ENCODE measurements at regions of chr15 and their contacts with region 1.

Region 1: DNA sequence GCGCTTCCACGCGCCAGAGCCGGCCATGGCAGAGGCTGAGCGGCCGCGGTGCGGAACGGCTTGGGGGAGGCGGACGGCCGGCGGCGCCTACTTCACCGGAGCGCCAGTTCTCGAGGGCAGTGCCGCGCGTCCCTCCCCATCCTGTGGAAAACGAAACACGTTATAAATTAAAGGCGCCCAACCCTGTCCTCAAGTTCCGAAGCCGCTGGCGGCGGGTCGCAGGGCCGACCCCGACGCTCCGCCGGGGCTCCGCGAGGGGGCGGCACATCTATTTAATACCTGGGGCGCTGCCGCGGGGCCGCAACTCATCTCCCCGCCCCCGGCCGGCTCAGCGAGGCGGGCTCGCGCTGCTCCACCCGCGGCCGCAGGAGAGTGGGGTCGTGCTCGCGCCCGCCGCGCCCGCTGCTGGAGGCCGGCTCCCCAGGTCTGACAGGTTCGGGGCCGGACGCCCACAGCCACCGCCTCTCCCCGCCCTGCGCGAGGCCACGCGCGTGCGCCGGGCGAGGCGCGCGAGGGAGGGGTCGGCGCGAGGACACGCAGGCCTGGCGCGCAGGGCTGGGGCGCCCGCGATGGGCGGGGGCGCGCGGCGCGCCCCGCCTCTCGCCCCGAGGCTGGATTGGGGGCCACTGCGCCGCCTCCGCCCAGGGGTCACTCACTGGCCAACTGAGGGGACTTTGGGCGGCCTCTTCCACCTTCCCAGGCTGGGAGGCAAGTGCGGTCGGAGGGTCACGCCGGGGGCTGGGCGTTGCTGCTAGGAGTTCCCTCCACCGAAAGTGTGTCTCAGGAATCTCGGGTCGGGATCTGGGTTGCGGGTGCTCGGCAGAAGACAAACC is at the start of gene SLC30A4:
- DNase-seq: peak; percentile 82
- H3K4me3 ChIP-seq: peak within 1 kb of the TSS; percentile 71 to 75
- H3K27ac ChIP-seq: peak within 1 kb of the TSS; percentile 91 to 95
- H3K4me1 ChIP-seq: no peaks in the 10 kb centered on the region
- H3K27me3 ChIP-seq: no peaks in the 10 kb centered on the region
- CTCF ChIP-seq: peak in 3 of 4 experiments; percentile 50 to 63 (median 61)
- POLR2A ChIP-seq: peak; percentile 39
- total RNA-seq, gene SLC30A4: 42.9 to 233 TPM

Region 2: GRCh38 chr15:45457641-45458433 is 64.7 kb before region 1 on chr15:
- intact Hi-C with region 1: no loop called
- DNase-seq: peak; percentile 82
- H3K4me3 ChIP-seq: peak overlapping the region; percentile 16 to 27
- H3K27ac ChIP-seq: peak overlapping the region; percentile 80 to 81
- H3K4me1 ChIP-seq: no peaks in the 10 kb centered on the region
- H3K27me3 ChIP-seq: no peaks in the 10 kb centered on the region
- CTCF ChIP-seq: peak; percentile 77 to 96 (median 79)
- POLR2A ChIP-seq: no peak

Region 3: GRCh38 chr15:45587095-45587860 is 64.7 kb after region 1 on chr15 and contains the start of gene BLOC1S6:
- intact Hi-C with region 1: loop called (anchors 1 kb)
- DNase-seq: peak; percentile 81
- H3K4me3 ChIP-seq: peak within 1 kb of the TSS; percentile 91 to 95
- H3K27ac ChIP-seq: peak within 1 kb of the TSS; percentile 98 to 99
- H3K4me1 ChIP-seq: no peaks in the 10 kb centered on the region
- H3K27me3 ChIP-seq: no peaks in the 10 kb centered on the region
- CTCF ChIP-seq: no peak
- POLR2A ChIP-seq: peak; percentile 52
- total RNA-seq, gene BLOC1S6: 46.0 to 82.5 TPM

Region 4: GRCh38 chr15:45611305-45611704 is 88.8 kb after region 1 on chr15:
- intact Hi-C with region 1: loop called (anchors 10 kb)
- DNase-seq: no peak
- H3K4me3 ChIP-seq: no peak overlapping the region
- H3K27ac ChIP-seq: no peak overlapping the region
- H3K4me1 ChIP-seq: no peaks in the 10 kb centered on the region
- H3K27me3 ChIP-seq: no peaks in the 10 kb centered on the region
- CTCF ChIP-seq: peak in 3 of 4 experiments; percentile 40 to 50 (median 49)
- POLR2A ChIP-seq: no peak